Mammary epithelial cell (primary cell): ENCODE measurements at regions of chr21 and their contacts with region 1.

Region 1: DNA sequence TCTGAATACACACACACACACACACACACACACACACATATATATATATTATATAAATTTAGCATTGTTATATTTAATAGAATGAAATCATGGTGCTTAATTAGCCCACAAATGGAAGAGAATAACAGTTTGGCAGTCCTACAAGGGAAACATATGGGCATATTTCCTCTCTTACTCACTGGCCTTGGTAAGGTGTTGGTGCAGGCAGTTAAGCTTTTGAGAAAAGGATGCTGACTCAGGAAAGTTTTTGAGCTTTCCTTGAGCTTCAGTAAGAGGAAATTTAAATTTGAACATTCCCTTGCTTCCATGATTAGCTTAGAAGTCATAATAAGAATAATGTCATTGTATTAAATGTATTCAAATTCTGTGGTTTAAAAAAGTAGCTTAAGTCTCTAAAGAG is 37.0 kb upstream of the B3GALT5 start:
- DNase-seq: peak; percentile 26
- H3K4me3 ChIP-seq: no peak overlapping the region
- H3K27ac ChIP-seq: no peak overlapping the region
- H3K4me1 ChIP-seq: no peaks in the 10 kb centered on the region
- H3K27me3 ChIP-seq: no peaks in the 10 kb centered on the region
- CTCF ChIP-seq: no peak

Region 2: DNA sequence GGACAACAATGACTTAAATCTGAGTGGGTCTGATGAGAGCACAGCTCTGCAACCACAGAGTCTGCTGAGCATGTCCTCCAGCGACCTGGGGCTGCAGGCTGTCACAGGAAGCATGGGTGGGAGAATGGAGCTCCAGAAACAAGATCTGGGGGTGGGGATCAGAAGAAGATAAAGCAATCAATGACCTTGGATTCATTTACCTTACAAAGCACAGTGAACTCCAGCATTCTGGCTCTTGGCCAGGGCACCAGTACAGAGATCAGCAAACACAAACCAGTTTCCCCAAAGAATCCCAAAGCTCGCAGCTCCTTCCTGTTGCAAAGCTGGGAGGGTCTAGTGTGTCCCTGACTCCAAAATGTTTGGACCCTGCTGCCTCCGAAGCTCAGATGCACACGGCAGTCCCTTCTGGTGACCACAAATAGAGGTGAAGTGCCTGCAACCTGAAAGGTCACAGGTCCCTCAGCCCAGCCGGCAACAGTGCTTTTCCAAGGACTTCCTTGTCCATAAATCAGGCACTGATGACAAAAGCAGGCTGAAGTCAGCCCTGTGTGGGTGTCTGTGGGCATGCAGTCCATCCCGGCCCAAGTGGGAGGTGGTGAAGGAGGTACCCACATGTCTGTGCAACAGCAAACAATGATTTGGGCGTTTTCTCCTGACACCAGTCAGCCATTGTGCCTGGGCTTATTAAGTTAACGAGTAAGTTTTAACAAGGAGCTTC is 48.0 kb before region 1 on chr21:
- CTCF ChIA-PET with region 1: no interaction called
- dilution Hi-C with region 1: loop called (anchors 5 kb)
- in situ Hi-C with region 1: no loop called
- intact Hi-C with region 1: no loop called
- DNase-seq: no peak
- H3K4me3 ChIP-seq: no peak overlapping the region
- H3K27ac ChIP-seq: no peak overlapping the region
- H3K4me1 ChIP-seq: no peaks in the 10 kb centered on the region
- H3K27me3 ChIP-seq: no peaks in the 10 kb centered on the region
- CTCF ChIP-seq: no peak

Region 3: DNA sequence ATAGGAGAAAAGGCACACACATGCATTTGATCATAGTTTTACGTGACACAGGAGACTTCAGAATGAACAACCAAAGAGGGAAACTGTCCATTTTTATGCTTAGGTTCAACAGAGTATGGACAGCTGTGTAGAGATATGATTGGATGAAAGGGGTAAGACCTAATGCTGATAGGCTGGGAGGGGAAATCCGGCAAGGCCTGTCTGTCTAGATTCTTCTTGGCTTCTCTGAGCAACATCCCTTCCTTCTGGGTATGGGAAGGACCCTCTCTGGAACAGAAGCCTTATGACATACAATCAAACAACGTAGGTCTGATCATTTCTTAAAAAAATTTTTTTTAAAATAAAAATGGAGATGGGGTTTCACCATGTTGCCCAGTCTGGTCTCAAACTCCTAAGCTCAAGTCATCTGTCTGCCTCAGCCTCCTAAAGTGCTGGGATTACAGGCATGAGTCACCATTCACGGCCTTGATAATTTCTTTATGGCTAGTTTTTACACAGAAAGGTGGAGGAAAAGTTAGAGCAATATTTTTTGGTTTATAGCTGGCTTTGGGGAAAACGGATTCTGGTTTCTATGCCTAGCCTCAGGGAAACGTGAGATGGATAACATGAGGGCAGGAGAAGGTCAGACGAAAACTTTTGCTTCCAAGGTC is 33.2 kb before region 1 on chr21:
- CTCF ChIA-PET with region 1: no interaction called
- dilution Hi-C with region 1: no loop called
- in situ Hi-C with region 1: no loop called
- intact Hi-C with region 1: no loop called
- DNase-seq: no peak
- H3K4me3 ChIP-seq: no peak overlapping the region
- H3K27ac ChIP-seq: no peak overlapping the region
- H3K4me1 ChIP-seq: no peaks in the 10 kb centered on the region
- H3K27me3 ChIP-seq: no peaks in the 10 kb centered on the region
- CTCF ChIP-seq: no peak

Region 4: DNA sequence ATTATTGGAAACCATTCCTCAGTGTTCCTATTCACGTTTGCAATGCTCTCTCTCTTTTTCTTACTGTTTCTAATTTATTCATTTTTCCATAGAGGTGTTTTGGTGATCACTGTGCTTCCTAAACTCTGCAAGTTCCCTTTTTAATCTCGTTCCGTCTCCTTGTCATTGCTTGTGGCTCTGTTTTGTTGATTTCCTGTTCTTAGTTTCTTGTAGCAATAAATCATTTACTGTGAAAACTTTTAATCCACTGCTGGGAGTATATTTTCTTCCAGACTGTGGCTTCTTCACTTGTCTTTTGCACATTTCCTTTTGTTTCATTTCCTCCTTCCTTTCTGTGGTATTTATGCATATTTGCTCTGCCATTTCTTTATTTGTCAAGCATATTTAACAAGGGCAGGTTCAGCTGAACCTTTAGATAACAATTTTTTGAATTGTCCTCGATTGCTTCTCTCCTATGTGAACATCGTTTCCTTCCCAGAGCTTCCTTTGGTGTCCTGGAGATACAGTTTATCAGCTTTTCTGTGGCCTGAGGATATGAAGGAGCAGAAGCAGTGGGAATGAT is 40.5 kb after region 1 on chr21:
- CTCF ChIA-PET with region 1: no interaction called
- dilution Hi-C with region 1: loop called (anchors 5 kb)
- in situ Hi-C with region 1: no loop called
- intact Hi-C with region 1: no loop called
- DNase-seq: no peak
- H3K4me3 ChIP-seq: no peak overlapping the region
- H3K27ac ChIP-seq: no peak overlapping the region
- H3K4me1 ChIP-seq: no peaks in the 10 kb centered on the region
- H3K27me3 ChIP-seq: peaks cover 4% of the 10 kb centered on the region
- CTCF ChIP-seq: no peak

Region 5: DNA sequence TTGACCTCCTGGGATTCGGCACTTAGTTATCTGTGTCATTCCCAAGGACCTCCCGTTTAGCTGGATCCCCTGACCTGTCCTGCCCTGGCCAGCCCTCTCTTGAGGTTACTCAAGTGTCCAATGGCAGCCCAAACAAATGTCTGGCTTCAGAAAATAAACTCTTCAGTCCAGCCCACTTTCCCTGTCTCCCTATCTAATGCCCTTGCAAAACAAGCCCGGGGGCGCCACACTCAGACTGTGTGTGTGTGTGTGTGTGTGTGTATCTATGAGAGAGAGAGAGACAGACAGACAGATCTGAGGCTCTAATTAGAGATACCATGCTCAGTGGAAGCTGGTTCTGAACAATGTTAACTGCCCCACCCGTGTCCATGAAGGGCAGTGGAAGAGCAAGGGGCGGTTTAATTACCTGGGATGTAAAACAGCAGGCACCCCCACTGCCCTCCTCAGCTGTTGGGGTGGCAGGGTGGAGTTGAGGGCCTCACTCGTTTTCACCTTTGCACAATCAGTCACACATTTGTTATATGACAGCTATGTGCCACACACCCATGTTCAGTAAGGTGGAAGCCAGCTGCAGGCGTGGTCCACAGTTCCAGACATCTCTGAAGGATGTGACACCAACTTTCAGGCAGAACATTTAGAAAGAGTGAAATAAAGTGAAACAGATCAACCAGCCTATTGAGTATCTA is 94.3 kb after region 1 on chr21:
- CTCF ChIA-PET with region 1: no interaction called
- dilution Hi-C with region 1: loop called (anchors 5 kb)
- in situ Hi-C with region 1: no loop called
- intact Hi-C with region 1: no loop called
- DNase-seq: no peak
- H3K4me3 ChIP-seq: no peak overlapping the region
- H3K27ac ChIP-seq: no peak overlapping the region
- H3K4me1 ChIP-seq: no peaks in the 10 kb centered on the region
- H3K27me3 ChIP-seq: no peaks in the 10 kb centered on the region
- CTCF ChIP-seq: no peak